ENCODE measurements at regions of chr1 and their contacts with region 1.

Region 1: DNA sequence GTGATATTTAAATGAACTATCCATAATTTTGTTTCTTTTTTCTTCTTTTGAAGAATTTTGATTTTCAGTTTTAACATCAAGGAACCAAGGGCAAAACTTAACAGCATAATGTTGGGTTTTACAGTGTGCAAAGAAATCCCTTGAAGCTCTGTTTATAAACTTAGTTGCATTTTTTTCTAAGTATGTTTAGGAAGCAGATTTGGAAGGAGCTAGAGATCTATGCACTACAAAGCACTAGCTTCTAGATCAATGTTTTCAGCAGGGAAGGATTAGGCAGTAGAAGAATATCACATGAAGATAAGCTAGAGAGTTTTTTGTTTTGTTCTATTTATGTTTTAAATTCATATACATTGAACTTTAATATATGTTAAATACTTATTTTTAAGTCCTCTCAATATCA is 250.6 kb upstream of the C1orf105 start:
- DNase-seq: no peak
- ATAC-seq: no peak
- H3K4me3 ChIP-seq: no peak overlapping the region
- H3K4me3 Mint-ChIP-seq: no peak overlapping the region
- H3K27ac ChIP-seq: no peak overlapping the region
- H3K27ac Mint-ChIP-seq: no peak overlapping the region
- H3K4me1 ChIP-seq: no peaks in the 10 kb centered on the region
- H3K4me1 Mint-ChIP-seq: no peaks in the 10 kb centered on the region
- H3K27me3 ChIP-seq: no peaks in the 10 kb centered on the region
- H3K27me3 Mint-ChIP-seq: peaks cover 4% of the 10 kb centered on the region
- CTCF ChIP-seq: no peak

Region 2: GRCh38 chr1:172117800-172118199 is 52.0 kb before region 1 on chr1:
- CTCF ChIA-PET with region 1: no interaction called
- POLR2A ChIA-PET with region 1: no interaction called
- intact Hi-C with region 1: no loop called
- DNase-seq: peak in 8 of 9 experiments; percentile 4 to 72 (median 22)
- ATAC-seq: peak; percentile 86
- H3K4me3 ChIP-seq: no peak overlapping the region
- H3K4me3 Mint-ChIP-seq: peak overlapping the region; percentile 24
- H3K27ac ChIP-seq: peak overlapping the region in 1 of 2 experiments; percentile 34
- H3K27ac Mint-ChIP-seq: peak overlapping the region; percentile 60
- H3K4me1 ChIP-seq: peaks cover 20% of the 10 kb centered on the region
- H3K4me1 Mint-ChIP-seq: peaks cover 26% of the 10 kb centered on the region
- H3K27me3 ChIP-seq: no peaks in the 10 kb centered on the region
- H3K27me3 Mint-ChIP-seq: no peaks in the 10 kb centered on the region
- CTCF ChIP-seq: no peak

Region 3: DNA sequence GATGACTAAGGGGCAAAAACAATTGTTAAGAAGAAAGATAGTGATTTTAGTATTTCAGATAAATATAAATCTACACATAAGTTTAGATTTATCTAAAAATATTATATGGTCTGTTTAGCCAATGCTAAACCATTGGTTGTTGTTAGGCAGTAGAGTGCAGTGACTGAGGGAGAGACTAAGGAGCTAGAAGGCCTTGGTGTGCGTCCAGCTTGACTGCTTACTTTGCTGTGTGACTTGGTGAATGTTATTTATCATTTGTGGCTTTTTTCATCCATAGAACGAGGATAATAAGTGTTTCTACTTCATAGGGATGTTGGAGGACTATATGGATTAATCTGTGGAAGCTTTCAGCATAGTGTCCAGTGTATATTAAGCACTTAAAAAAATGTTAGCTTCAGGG is 14.1 kb before region 1 on chr1:
- CTCF ChIA-PET with region 1: interaction called, 3 read pairs
- POLR2A ChIA-PET with region 1: no interaction called
- intact Hi-C with region 1: loop called in 1 of 2 experiments (anchors 2 kb)
- DNase-seq: no peak
- ATAC-seq: no peak
- H3K4me3 ChIP-seq: no peak overlapping the region
- H3K4me3 Mint-ChIP-seq: no peak overlapping the region
- H3K27ac ChIP-seq: no peak overlapping the region
- H3K27ac Mint-ChIP-seq: no peak overlapping the region
- H3K4me1 ChIP-seq: no peaks in the 10 kb centered on the region
- H3K4me1 Mint-ChIP-seq: peaks cover 6% of the 10 kb centered on the region
- H3K27me3 ChIP-seq: no peaks in the 10 kb centered on the region
- H3K27me3 Mint-ChIP-seq: no peaks in the 10 kb centered on the region
- CTCF ChIP-seq: no peak

Measured in CD8-positive, alpha-beta T cell (primary cell).